Heart left ventricle (tissue), 16 donors: ENCODE measurements at regions of chr4 and their contacts with region 1.

Region 1: GRCh38 chr4:100742045-100742444 is 224.2 kb upstream of the EMCN start:
- DNase-seq: peak in 1 of 5 donors; percentile 16
- ATAC-seq: no peak
- H3K4me3 ChIP-seq: no peak overlapping the region
- H3K27ac ChIP-seq: no peak overlapping the region
- H3K4me1 ChIP-seq: peaks cover 0 to 12% (median 6%) of the 10 kb centered on the region in 12 donors
- H3K27me3 ChIP-seq: no peaks in the 10 kb centered on the region
- CTCF ChIP-seq: peak in 11 of 12 donors; percentile 25 to 65 (median 46)
- POLR2A ChIP-seq: no peak

Region 2: DNA sequence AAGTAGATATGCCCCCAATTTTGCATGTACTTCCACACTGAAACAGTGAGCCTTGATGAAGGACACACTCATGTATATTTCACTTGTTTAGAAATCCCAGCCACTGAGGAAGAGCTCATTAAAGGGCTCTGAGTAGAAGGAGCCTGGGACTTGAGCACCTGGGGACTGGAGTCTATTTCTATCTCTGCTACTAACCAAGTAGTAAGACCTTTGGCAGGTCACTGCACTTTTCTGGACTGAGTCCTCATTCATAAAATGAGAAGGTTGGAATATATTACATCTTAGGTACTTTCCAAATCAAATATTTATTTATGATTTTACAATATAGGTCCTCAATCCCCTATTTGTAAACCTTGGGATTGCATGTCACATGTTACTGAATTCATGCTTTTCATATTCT is 1006.2 kb before region 1 on chr4:
- intact Hi-C with region 1: no loop called
- DNase-seq: no peak
- ATAC-seq: no peak
- H3K4me3 ChIP-seq: no peak overlapping the region
- H3K27ac ChIP-seq: no peak overlapping the region
- H3K4me1 ChIP-seq: peaks cover 0 to 6% (median 0%) of the 10 kb centered on the region in 12 donors
- H3K27me3 ChIP-seq: no peaks in the 10 kb centered on the region
- CTCF ChIP-seq: no peak
- POLR2A ChIP-seq: no peak

Region 3: DNA sequence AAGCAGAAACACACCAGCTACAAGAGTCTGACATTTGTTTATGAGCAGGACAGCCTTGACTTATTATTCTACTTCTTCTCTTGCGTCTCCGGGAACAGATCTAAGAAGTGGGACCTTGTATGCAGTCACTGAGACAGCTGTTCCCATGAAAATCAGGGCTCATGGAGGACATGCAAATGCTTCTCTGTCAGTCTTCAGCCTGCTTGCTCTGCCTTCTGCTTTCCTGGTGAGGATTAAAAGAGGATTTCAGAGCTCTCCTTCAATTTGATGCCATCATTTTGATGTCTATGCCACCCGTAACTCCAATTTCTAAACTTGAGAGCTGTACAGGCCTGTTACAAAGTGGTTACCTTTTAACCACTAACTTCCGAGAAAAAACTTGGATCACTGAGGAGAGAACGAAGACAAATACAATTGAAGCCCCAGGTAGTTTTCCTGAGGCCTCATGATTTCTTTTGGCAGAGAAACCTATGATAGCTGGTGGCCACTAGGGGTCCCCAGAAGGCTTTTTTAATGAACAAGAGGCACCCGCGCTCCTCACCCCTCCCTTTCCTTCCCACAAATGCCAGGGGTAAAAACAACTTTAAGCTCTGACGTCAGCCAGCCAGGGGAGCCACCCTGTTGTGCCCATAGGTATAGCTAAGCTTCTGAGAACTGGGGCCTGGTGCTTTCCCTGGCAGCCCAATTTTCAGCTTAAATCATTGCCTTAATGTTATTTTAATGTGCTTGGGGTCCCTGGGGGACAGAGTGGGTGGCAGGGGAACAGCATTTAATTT is 648.8 kb before region 1 on chr4:
- intact Hi-C with region 1: loop called in 7 of 10 experiments (anchors 5 to 10 kb)
- DNase-seq: peak; percentile 63 to 87 (median 80)
- ATAC-seq: peak; percentile 75 to 96 (median 94)
- H3K4me3 ChIP-seq: no peak overlapping the region
- H3K27ac ChIP-seq: peak overlapping the region in 7 of 12 donors; percentile 1 to 53 (median 23)
- H3K4me1 ChIP-seq: peaks cover 0 to 28% (median 11%) of the 10 kb centered on the region in 12 donors
- H3K27me3 ChIP-seq: no peaks in the 10 kb centered on the region
- CTCF ChIP-seq: peak; percentile 70 to 93 (median 83)
- POLR2A ChIP-seq: no peak

Region 4: GRCh38 chr4:100421361-100421978 is 320.6 kb before region 1 on chr4:
- intact Hi-C with region 1: loop called (anchors 2 to 10 kb)
- DNase-seq: no peak
- ATAC-seq: peak in 1 of 4 donors; percentile 70
- H3K4me3 ChIP-seq: peak overlapping the region in 3 of 12 donors; percentile 27 to 36 (median 30)
- H3K27ac ChIP-seq: peak overlapping the region in 5 of 12 donors; percentile 12 to 37 (median 17)
- H3K4me1 ChIP-seq: peaks cover 0 to 29% (median 5%) of the 10 kb centered on the region in 12 donors
- H3K27me3 ChIP-seq: no peaks in the 10 kb centered on the region
- CTCF ChIP-seq: peak; percentile 27 to 70 (median 49)
- POLR2A ChIP-seq: no peak

Region 5: DNA sequence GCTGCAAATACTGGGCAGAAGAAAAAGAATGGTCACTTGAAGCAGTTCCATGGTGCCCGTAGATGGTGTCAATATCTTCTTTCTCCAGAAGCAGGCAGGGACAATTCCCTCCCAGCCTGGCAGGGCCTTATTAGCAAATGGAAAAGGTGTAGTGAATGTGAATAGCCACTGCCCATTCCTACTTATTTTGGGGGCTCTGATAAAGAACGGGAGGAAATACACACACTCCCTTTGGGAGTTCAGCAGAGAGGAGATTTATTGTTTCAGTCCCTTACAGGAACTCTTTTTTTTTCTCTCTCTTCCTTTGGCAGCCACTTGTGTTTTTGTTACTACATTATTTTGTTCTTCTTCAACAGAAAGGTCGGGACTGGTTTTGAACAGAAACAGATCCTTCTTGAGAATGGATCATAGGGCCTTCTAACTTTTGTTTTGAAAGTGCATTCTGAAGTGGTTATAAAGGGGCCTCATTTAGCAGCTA is 224.1 kb before region 1 on chr4 and contains the start of gene EMCN:
- intact Hi-C with region 1: loop called in 6 of 10 experiments (anchors 1 to 10 kb)
- DNase-seq: peak in 3 of 5 donors; percentile 18 to 52 (median 24)
- ATAC-seq: peak; percentile 67 to 93 (median 84)
- H3K4me3 ChIP-seq: peak within 1 kb of the TSS; percentile 0 to 65 (median 52)
- H3K27ac ChIP-seq: peak within 1 kb of the TSS; percentile 36 to 87 (median 77)
- H3K4me1 ChIP-seq: peaks cover 0 to 14% (median 0%) of the 10 kb centered on the region in 12 donors
- H3K27me3 ChIP-seq: no peaks in the 10 kb centered on the region
- CTCF ChIP-seq: no peak
- POLR2A ChIP-seq: peak in 1 of 2 donors; percentile 48
- total RNA-seq, gene EMCN: 21.3 to 52.6 (median 31.5) TPM

Region 6: GRCh38 chr4:100591161-100591876 is 150.7 kb before region 1 on chr4:
- intact Hi-C with region 1: loop called in 3 of 10 experiments (anchors 2 to 5 kb)
- DNase-seq: peak; percentile 45 to 79 (median 68)
- ATAC-seq: peak; percentile 81 to 98 (median 84)
- H3K4me3 ChIP-seq: no peak overlapping the region
- H3K27ac ChIP-seq: peak overlapping the region in 1 of 12 donors; percentile 21
- H3K4me1 ChIP-seq: peaks cover 0 to 13% (median 3%) of the 10 kb centered on the region in 12 donors
- H3K27me3 ChIP-seq: no peaks in the 10 kb centered on the region
- CTCF ChIP-seq: no peak
- POLR2A ChIP-seq: no peak

Region 7: DNA sequence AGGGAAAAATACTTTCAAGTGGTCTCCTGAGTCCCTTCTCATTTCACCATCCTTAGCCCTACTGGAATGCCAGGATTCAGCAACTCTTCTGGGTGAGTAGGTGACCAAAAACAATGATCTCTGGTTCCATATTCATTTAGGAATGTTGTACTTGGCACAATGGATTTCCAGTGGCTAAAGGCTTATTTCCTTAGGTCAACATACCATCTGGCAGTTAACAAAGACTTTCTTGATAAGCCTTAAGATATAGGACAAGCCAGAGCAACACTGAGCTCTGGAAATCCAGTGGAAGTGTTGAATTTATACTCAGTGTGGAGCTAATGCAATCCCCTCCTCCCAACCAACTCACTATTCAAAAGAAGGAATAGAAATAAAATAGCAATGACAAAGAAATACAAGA is 84.9 kb before region 1 on chr4:
- intact Hi-C with region 1: loop called in 3 of 10 experiments (anchors 5 kb)
- DNase-seq: no peak
- ATAC-seq: peak; percentile 32 to 76 (median 50)
- H3K4me3 ChIP-seq: no peak overlapping the region
- H3K27ac ChIP-seq: peak overlapping the region in 1 of 12 donors; percentile 13
- H3K4me1 ChIP-seq: peaks cover 0 to 5% (median 0%) of the 10 kb centered on the region in 12 donors
- H3K27me3 ChIP-seq: no peaks in the 10 kb centered on the region
- CTCF ChIP-seq: no peak
- POLR2A ChIP-seq: no peak